ENCODE measurements at regions of chr12 and their contacts with region 1.

Region 1: DNA sequence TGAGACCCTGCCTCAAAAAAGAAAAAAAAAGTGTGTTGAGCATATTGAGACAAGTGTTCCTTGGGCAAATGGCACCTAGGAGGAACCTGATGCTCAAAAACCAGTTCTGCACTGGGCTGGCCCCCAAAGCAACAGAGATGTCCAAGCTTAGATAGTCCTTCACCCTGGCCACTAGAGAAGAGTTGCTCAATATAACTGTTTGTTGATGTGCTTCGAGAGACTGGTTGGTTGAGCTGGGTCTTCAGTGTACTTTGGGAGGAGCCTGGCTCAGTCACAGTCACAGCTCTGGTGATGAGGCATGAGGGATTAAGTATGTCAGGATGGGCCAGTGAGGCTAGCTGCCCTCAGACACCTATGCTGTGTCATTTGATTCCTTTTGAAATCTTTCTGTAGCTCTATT is 38.0 kb downstream of the SLC2A14 start:
- DNase-seq: no peak
- ATAC-seq: no peak
- H3K4me3 ChIP-seq: no peak overlapping the region
- H3K27ac ChIP-seq: no peak overlapping the region
- H3K4me1 ChIP-seq: no peaks in the 10 kb centered on the region
- H3K27me3 ChIP-seq: no peaks in the 10 kb centered on the region
- CTCF ChIP-seq: no peak

Region 2: GRCh38 chr12:7801460-7801859 is 33.2 kb before region 1 on chr12:
- CTCF ChIA-PET with region 1: no interaction called
- POLR2A ChIA-PET with region 1: interaction called, 24 read pairs
- in situ Hi-C with region 1: no loop called
- intact Hi-C with region 1: no loop called
- DNase-seq: no peak
- ATAC-seq: no peak
- H3K4me3 ChIP-seq: no peak overlapping the region
- H3K27ac ChIP-seq: no peak overlapping the region
- H3K4me1 ChIP-seq: no peaks in the 10 kb centered on the region
- H3K27me3 ChIP-seq: no peaks in the 10 kb centered on the region
- CTCF ChIP-seq: no peak

Region 3: GRCh38 chr12:7892186-7892980 is 57.7 kb after region 1 on chr12:
- CTCF ChIA-PET with region 1: interaction called, 19 read pairs
- POLR2A ChIA-PET with region 1: no interaction called
- in situ Hi-C with region 1: no loop called
- intact Hi-C with region 1: no loop called
- DNase-seq: no peak
- ATAC-seq: no peak
- H3K4me3 ChIP-seq: no peak overlapping the region
- H3K27ac ChIP-seq: no peak overlapping the region
- H3K4me1 ChIP-seq: no peaks in the 10 kb centered on the region
- H3K27me3 ChIP-seq: no peaks in the 10 kb centered on the region
- CTCF ChIP-seq: no peak

Region 4: GRCh38 chr12:8145754-8146441 is 311.2 kb after region 1 on chr12:
- CTCF ChIA-PET with region 1: no interaction called
- POLR2A ChIA-PET with region 1: no interaction called
- in situ Hi-C with region 1: no loop called
- intact Hi-C with region 1: no loop called
- DNase-seq: no peak
- ATAC-seq: no peak
- H3K4me3 ChIP-seq: no peak overlapping the region
- H3K27ac ChIP-seq: no peak overlapping the region
- H3K4me1 ChIP-seq: no peaks in the 10 kb centered on the region
- H3K27me3 ChIP-seq: no peaks in the 10 kb centered on the region
- CTCF ChIP-seq: no peak

Region 5: GRCh38 chr12:8637666-8638065 is 803.0 kb after region 1 on chr12:
- CTCF ChIA-PET with region 1: no interaction called
- POLR2A ChIA-PET with region 1: no interaction called
- in situ Hi-C with region 1: no loop called
- intact Hi-C with region 1: no loop called
- DNase-seq: no peak
- ATAC-seq: no peak
- H3K4me3 ChIP-seq: no peak overlapping the region
- H3K27ac ChIP-seq: no peak overlapping the region
- H3K4me1 ChIP-seq: no peaks in the 10 kb centered on the region
- H3K27me3 ChIP-seq: no peaks in the 10 kb centered on the region
- CTCF ChIP-seq: no peak